Caco-2 (cell line): ENCODE measurements at regions of chr15 and their contacts with region 1.

Region 1: GRCh38 chr15:48021336-48022086 is 99.3 kb upstream of the SLC24A5 start:
- DNase-seq: no peak
- H3K4me3 ChIP-seq: no peak overlapping the region
- H3K4me3 Mint-ChIP-seq: no peak overlapping the region
- H3K27ac Mint-ChIP-seq: no peak overlapping the region
- H3K4me1 ChIP-seq: no peaks in the 10 kb centered on the region
- H3K4me1 Mint-ChIP-seq: no peaks in the 10 kb centered on the region
- H3K27me3 ChIP-seq: no peaks in the 10 kb centered on the region
- H3K27me3 Mint-ChIP-seq: peaks cover 11% of the 10 kb centered on the region
- CTCF ChIP-seq: no peak

Region 2: DNA sequence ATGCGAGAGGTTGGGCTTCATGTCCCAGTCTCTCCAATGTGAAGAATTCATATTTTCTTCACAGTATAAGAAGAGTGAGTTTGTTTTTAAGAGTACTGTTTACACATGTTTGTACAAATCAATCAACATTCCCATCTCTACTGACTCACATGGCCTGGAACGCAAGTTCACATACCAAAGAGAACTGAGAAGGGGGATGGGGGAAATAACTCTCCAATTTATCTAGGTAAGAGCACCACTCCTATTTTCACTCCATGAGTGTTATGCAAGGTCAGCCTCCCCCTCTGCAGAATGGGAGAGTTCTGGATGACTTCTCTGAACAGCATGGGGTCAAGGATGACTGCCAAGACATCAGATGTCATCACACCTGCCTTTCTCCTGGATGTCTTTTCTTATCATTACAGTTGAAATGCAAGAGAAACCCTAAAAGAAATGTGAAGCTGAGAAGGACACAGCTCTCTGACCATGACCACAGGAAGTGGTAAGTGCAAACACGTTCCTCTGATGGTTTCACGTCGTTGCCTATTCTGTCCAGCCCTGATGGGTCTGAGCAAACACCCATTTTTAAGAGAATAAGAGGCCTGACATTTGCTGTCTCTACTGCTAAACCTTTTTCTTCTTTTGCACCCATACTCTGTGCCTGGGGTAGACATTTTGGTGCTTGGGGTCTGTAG is 208.9 kb before region 1 on chr15:
- CTCF ChIA-PET with region 1: no interaction called
- POLR2A ChIA-PET with region 1: no interaction called
- intact Hi-C with region 1: no loop called
- DNase-seq: peak in 1 of 2 experiments; percentile 11
- H3K4me3 ChIP-seq: no peak overlapping the region
- H3K4me3 Mint-ChIP-seq: no peak overlapping the region
- H3K27ac Mint-ChIP-seq: no peak overlapping the region
- H3K4me1 ChIP-seq: peaks cover 12% of the 10 kb centered on the region; the same call in 1 of the 2 replicates
- H3K4me1 Mint-ChIP-seq: no peaks in the 10 kb centered on the region
- H3K27me3 ChIP-seq: no peaks in the 10 kb centered on the region
- H3K27me3 Mint-ChIP-seq: no peaks in the 10 kb centered on the region
- CTCF ChIP-seq: no peak

Region 3: GRCh38 chr15:47975427-47975826 is 46.1 kb before region 1 on chr15:
- CTCF ChIA-PET with region 1: no interaction called
- POLR2A ChIA-PET with region 1: no interaction called
- intact Hi-C with region 1: no loop called
- DNase-seq: no peak
- H3K4me3 ChIP-seq: no peak overlapping the region
- H3K4me3 Mint-ChIP-seq: no peak overlapping the region
- H3K27ac Mint-ChIP-seq: no peak overlapping the region
- H3K4me1 ChIP-seq: no peaks in the 10 kb centered on the region
- H3K4me1 Mint-ChIP-seq: no peaks in the 10 kb centered on the region
- H3K27me3 ChIP-seq: no peaks in the 10 kb centered on the region
- H3K27me3 Mint-ChIP-seq: peaks cover 4% of the 10 kb centered on the region
- CTCF ChIP-seq: no peak

Region 4: DNA sequence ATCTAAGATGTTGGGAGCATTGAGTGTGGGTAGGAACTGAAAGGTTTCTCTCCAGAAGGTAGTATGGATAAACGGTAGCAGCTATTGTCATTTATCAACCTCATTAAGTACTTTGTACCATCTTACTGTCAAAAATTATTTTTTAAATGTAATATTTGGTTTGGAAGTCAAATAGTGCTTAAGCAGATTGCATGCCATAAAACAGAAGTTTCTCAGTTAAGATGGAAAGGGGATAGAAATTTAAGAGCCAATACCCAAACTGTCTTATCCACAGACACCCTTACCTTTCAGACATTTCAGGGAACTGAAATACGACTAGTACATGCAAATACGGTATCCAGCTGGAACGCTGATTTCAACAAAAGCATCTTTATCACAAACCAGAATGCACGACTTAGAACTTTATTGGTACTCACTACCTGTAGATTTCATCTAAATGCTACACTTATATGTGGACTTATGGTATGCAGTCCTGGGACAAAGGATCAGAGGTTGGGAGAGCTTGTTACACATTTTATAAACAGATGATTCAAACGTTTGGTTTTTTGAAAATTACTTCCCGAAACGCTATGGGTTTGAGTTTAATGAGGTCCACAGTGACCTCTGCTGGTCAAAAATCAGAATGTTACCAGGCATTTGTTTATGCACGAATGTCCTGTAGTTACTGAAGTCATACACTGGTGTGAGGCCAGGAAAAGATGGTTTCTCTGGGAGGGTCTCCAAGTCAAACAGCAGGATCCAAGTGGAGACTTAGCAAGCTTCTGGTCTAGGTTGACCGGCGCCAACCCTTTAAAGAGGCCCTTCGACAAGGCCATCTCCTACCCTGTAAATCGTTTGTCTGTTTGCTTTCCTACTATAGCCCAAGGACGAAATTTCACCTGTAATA is 264.1 kb after region 1 on chr15:
- CTCF ChIA-PET with region 1: no interaction called
- POLR2A ChIA-PET with region 1: no interaction called
- intact Hi-C with region 1: loop called (anchors 10 kb)
- DNase-seq: peak; percentile 46 to 63
- H3K4me3 ChIP-seq: no peak overlapping the region
- H3K4me3 Mint-ChIP-seq: no peak overlapping the region
- H3K27ac Mint-ChIP-seq: no peak overlapping the region
- H3K4me1 ChIP-seq: no peaks in the 10 kb centered on the region
- H3K4me1 Mint-ChIP-seq: peaks cover 7% of the 10 kb centered on the region
- H3K27me3 ChIP-seq: no peaks in the 10 kb centered on the region
- H3K27me3 Mint-ChIP-seq: peaks cover 13% of the 10 kb centered on the region
- CTCF ChIP-seq: peak; percentile 48 to 55